Naive thymus-derived CD4-positive, alpha-beta T cell (primary cell): ENCODE measurements at regions of chr18 and their contacts with region 1.

Region 1: GRCh38 chr18:712401-713134 is at the start of gene ENOSF1:
- DNase-seq: peak; percentile 68 to 93 (median 80)
- ATAC-seq: peak; percentile 94
- H3K4me3 ChIP-seq: peak within 1 kb of the TSS; percentile 95
- H3K4me3 Mint-ChIP-seq: peak within 1 kb of the TSS; percentile 84 to 98 (median 92)
- H3K27ac ChIP-seq: peak within 1 kb of the TSS; percentile 76
- H3K27ac Mint-ChIP-seq: peak within 1 kb of the TSS; percentile 88 to 99 (median 98)
- H3K4me1 ChIP-seq: peaks cover 8 to 12% of the 10 kb centered on the region in 2 donors
- H3K4me1 Mint-ChIP-seq: peaks cover 20 to 39% (median 36%) of the 10 kb centered on the region in 7 donors
- H3K27me3 ChIP-seq: no peaks in the 10 kb centered on the region
- H3K27me3 Mint-ChIP-seq: no peaks in the 10 kb centered on the region
- total RNA-seq, gene ENOSF1: 80.1 to 137 (median 90.0) TPM

Region 2: GRCh38 chr18:267688-268552 is 444.6 kb before region 1 on chr18 and contains the start of gene THOC1:
- CTCF ChIA-PET with region 1: no interaction called
- POLR2A ChIA-PET with region 1: interaction called, 3 read pairs
- intact Hi-C with region 1: loop called (anchors 1 to 5 kb)
- DNase-seq: peak; percentile 88 to 95 (median 93)
- ATAC-seq: peak; percentile 96
- H3K4me3 ChIP-seq: peak within 1 kb of the TSS; percentile 99
- H3K4me3 Mint-ChIP-seq: peak within 1 kb of the TSS; percentile 93 to 100 (median 98)
- H3K27ac ChIP-seq: peak within 1 kb of the TSS; percentile 98
- H3K27ac Mint-ChIP-seq: peak within 1 kb of the TSS; percentile 99 to 100 (median 100)
- H3K4me1 ChIP-seq: peaks cover 11 to 18% of the 10 kb centered on the region in 2 donors
- H3K4me1 Mint-ChIP-seq: peaks cover 19 to 51% (median 38%) of the 10 kb centered on the region in 7 donors
- H3K27me3 ChIP-seq: no peaks in the 10 kb centered on the region
- H3K27me3 Mint-ChIP-seq: no peaks in the 10 kb centered on the region
- total RNA-seq, gene THOC1: 56.7 to 93.7 (median 74.5) TPM

Region 3: GRCh38 chr18:658001-658946 is 54.3 kb before region 1 on chr18:
- CTCF ChIA-PET with region 1: no interaction called
- POLR2A ChIA-PET with region 1: no interaction called
- intact Hi-C with region 1: loop called in 1 of 2 experiments (anchors 1 kb)
- DNase-seq: peak in 3 of 9 donors; percentile 20 to 78 (median 31)
- ATAC-seq: peak; percentile 68
- H3K4me3 ChIP-seq: peak overlapping the region; percentile 79
- H3K4me3 Mint-ChIP-seq: peak overlapping the region; percentile 81 to 96 (median 83)
- H3K27ac ChIP-seq: no peak overlapping the region
- H3K27ac Mint-ChIP-seq: peak overlapping the region in 1 of 9 donors; percentile 94
- H3K4me1 ChIP-seq: peaks cover 0 to 5% of the 10 kb centered on the region in 2 donors
- H3K4me1 Mint-ChIP-seq: peaks cover 0 to 50% (median 10%) of the 10 kb centered on the region in 7 donors
- H3K27me3 ChIP-seq: peaks cover 0 to 5% of the 10 kb centered on the region in 2 donors
- H3K27me3 Mint-ChIP-seq: peaks cover 0 to 43% (median 35%) of the 10 kb centered on the region in 5 donors

Region 4: GRCh38 chr18:741931-742512 is 29.5 kb after region 1 on chr18:
- CTCF ChIA-PET with region 1: interaction called, 3 read pairs
- POLR2A ChIA-PET with region 1: interaction called, 3 read pairs
- intact Hi-C with region 1: loop called in 1 of 2 experiments (anchors 2 kb)
- DNase-seq: peak in 7 of 9 donors; percentile 27 to 58 (median 49)
- ATAC-seq: peak; percentile 88
- H3K4me3 ChIP-seq: no peak overlapping the region
- H3K4me3 Mint-ChIP-seq: no peak overlapping the region
- H3K27ac ChIP-seq: no peak overlapping the region
- H3K27ac Mint-ChIP-seq: peak overlapping the region in 2 of 9 donors; percentile 38 to 51
- H3K4me1 ChIP-seq: no peaks in the 10 kb centered on the region
- H3K4me1 Mint-ChIP-seq: peaks cover 0 to 10% (median 4%) of the 10 kb centered on the region in 7 donors
- H3K27me3 ChIP-seq: no peaks in the 10 kb centered on the region
- H3K27me3 Mint-ChIP-seq: no peaks in the 10 kb centered on the region

Region 5: GRCh38 chr18:839224-840022 is 126.9 kb after region 1 on chr18:
- CTCF ChIA-PET with region 1: interaction called, 7 read pairs
- POLR2A ChIA-PET with region 1: no interaction called
- intact Hi-C with region 1: loop called in 1 of 2 experiments (anchors 1 kb)
- DNase-seq: peak; percentile 55 to 89 (median 80)
- ATAC-seq: peak; percentile 98
- H3K4me3 ChIP-seq: no peak overlapping the region
- H3K4me3 Mint-ChIP-seq: peak overlapping the region in 1 of 10 donors; percentile 15
- H3K27ac ChIP-seq: no peak overlapping the region
- H3K27ac Mint-ChIP-seq: peak overlapping the region in 2 of 9 donors; percentile 19 to 43
- H3K4me1 ChIP-seq: peaks cover 0 to 4% of the 10 kb centered on the region in 2 donors
- H3K4me1 Mint-ChIP-seq: peaks cover 0 to 16% (median 4%) of the 10 kb centered on the region in 7 donors
- H3K27me3 ChIP-seq: no peaks in the 10 kb centered on the region
- H3K27me3 Mint-ChIP-seq: peaks cover 0 to 18% (median 7%) of the 10 kb centered on the region in 5 donors